Activated CD8-positive, alpha-beta T cell treated with anti-CD3 and anti-CD28 coated beads for 36 hours (primary cell): ENCODE measurements at regions of chr10 and their contacts with region 1.

Region 1: GRCh38 chr10:102352066-102352715 is 43.3 kb upstream of the NFKB2 start:
- DNase-seq: peak; percentile 79
- ATAC-seq: peak; percentile 86
- H3K4me3 Mint-ChIP-seq: no peak overlapping the region
- H3K27ac Mint-ChIP-seq: no peak overlapping the region
- H3K4me1 Mint-ChIP-seq: peaks cover 6% of the 10 kb centered on the region
- H3K27me3 Mint-ChIP-seq: no peaks in the 10 kb centered on the region
- CTCF ChIP-seq: peak; percentile 98

Region 2: GRCh38 chr10:102167861-102168260 is 184.3 kb before region 1 on chr10:
- CTCF ChIA-PET with region 1: interaction called, 80 read pairs
- POLR2A ChIA-PET with region 1: interaction called, 4 read pairs
- intact Hi-C with region 1: no loop called
- DNase-seq: no peak
- ATAC-seq: no peak
- H3K4me3 Mint-ChIP-seq: no peak overlapping the region
- H3K27ac Mint-ChIP-seq: no peak overlapping the region
- H3K4me1 Mint-ChIP-seq: peaks cover 5% of the 10 kb centered on the region
- H3K27me3 Mint-ChIP-seq: no peaks in the 10 kb centered on the region
- CTCF ChIP-seq: no peak

Region 3: DNA sequence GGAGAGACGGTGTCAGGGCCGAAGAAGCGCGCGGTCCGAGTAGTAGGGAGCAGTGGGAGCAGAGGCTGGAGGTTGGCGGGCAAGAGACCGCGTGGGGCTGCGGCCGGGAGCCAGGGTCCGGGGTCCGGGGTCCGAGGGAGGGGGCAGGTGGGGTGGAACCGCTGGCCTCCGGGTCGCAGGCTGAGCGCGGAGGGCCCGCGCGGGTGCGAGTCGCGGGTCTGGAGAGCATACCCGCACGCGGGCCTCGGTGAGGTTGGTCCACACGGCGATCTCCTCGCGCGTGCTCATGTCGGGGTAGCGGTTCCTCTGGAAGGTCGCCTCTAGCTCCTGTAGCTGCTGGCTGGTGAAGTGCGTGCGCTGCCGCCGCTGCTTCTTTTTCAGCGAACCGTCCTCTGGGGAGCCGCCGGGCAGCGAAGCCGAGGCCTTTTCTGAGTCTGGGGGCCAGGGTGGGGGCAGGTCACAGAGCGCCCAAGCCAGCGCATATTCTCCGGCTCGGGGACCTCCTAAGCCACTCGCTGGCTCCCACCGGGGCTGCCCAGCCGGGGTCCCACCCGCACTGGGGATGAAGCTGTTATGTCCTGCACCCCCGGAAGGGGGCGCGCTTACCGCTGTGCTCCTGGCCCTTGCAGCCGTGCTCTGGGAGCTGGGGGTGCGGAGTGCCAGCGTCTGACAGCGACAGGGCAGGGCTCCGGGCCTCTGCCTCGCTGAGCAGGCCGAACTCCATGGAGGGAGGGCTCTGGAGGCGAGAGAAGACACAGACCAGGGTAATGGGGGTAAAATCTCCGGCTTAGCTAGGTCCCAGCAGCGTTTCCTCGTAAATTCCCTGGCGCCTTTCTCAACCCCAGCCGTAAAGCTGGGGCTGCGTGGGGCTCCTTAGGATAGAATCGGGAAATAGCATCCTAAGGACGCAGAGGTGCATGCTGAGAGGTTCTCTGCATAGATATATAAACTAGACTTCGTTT is 120.6 kb before region 1 on chr10:
- CTCF ChIA-PET with region 1: interaction called, 886 read pairs
- POLR2A ChIA-PET with region 1: interaction called, 6 read pairs
- intact Hi-C with region 1: loop called (anchors 1 kb)
- DNase-seq: peak; percentile 84
- ATAC-seq: peak; percentile 79
- H3K4me3 Mint-ChIP-seq: peak overlapping the region; percentile 70
- H3K27ac Mint-ChIP-seq: no peak overlapping the region
- H3K4me1 Mint-ChIP-seq: peaks cover 5% of the 10 kb centered on the region
- H3K27me3 Mint-ChIP-seq: peaks cover 55% of the 10 kb centered on the region
- CTCF ChIP-seq: peak; percentile 93

Region 4: DNA sequence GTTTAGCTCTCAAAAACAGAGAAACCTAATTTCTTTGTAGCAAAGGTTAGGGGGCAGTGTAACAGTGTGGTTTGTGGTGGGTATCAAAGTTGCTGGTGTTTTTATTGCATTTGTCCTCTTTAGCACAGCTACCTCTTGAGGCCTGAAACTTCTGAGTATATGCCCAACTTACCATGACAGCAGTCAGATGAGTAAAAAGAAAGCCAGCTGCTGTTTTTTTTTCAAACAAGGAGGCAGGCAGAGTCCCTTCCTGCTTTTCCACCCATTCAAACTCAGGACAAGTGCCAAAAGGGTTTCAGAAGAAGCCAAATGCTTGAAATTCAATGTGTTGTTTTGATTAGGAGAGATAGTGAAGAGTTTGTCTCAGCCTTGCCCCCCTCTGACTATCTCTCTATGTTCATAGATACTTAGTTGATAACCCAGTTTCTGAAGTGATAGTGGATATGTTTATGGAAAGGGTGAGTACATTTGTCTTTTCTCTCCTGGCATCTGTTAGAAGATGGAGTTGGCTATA is 83.8 kb before region 1 on chr10:
- CTCF ChIA-PET with region 1: interaction called, 18 read pairs
- POLR2A ChIA-PET with region 1: interaction called, 4 read pairs
- intact Hi-C with region 1: no loop called
- DNase-seq: peak; percentile 16
- ATAC-seq: peak; percentile 60
- H3K4me3 Mint-ChIP-seq: no peak overlapping the region
- H3K27ac Mint-ChIP-seq: peak overlapping the region; percentile 87
- H3K4me1 Mint-ChIP-seq: peaks cover 55% of the 10 kb centered on the region
- H3K27me3 Mint-ChIP-seq: no peaks in the 10 kb centered on the region
- CTCF ChIP-seq: no peak

Region 5: GRCh38 chr10:102283488-102283887 is 68.7 kb before region 1 on chr10:
- CTCF ChIA-PET with region 1: interaction called, 13 read pairs
- POLR2A ChIA-PET with region 1: no interaction called
- intact Hi-C with region 1: no loop called
- DNase-seq: no peak
- ATAC-seq: no peak
- H3K4me3 Mint-ChIP-seq: no peak overlapping the region
- H3K27ac Mint-ChIP-seq: peak overlapping the region; percentile 72
- H3K4me1 Mint-ChIP-seq: peaks cover 75% of the 10 kb centered on the region
- H3K27me3 Mint-ChIP-seq: no peaks in the 10 kb centered on the region
- CTCF ChIP-seq: no peak

Region 6: GRCh38 chr10:102310361-102311024 is 41.7 kb before region 1 on chr10:
- CTCF ChIA-PET with region 1: interaction called, 10 read pairs
- POLR2A ChIA-PET with region 1: no interaction called
- intact Hi-C with region 1: no loop called
- DNase-seq: no peak
- ATAC-seq: no peak
- H3K4me3 Mint-ChIP-seq: no peak overlapping the region
- H3K27ac Mint-ChIP-seq: no peak overlapping the region
- H3K4me1 Mint-ChIP-seq: peaks cover 39% of the 10 kb centered on the region
- H3K27me3 Mint-ChIP-seq: no peaks in the 10 kb centered on the region
- CTCF ChIP-seq: no peak

Region 7: DNA sequence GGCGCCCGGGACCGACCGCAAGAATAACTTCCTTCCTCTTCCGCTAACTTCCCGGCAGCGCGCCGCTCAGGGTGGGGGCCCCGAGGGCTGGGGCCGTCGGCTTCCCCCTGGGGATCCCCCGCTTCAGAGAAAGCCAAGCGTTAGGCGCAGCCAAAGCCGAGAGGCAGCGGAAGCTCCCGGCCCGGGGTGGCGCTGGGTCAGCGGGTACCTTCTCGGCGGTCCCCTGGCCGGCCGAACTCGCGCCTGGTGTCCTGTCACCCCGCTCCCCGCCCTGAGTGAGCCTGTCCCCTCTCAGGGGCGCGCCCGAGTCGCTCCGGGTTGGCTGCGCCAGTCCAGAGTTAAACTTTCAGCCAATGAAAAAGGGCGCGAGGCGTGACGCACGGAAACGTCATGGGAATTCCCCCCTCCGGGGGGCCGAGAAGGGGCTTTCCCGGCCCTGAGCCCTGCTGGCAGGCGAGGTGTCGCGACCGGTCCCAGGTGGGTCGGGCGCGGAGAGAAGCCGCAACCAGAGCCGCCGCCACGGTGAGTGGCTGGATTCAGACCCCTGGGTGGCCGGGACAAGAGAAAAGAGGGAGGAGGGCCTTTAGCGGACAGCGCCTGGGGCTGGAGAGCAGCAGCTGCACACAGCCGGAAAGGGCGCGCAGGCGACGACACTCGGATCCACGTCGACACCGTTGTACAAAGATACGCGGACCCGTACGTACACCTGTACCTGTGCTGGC is 42.0 kb after region 1 on chr10:
- CTCF ChIA-PET with region 1: interaction called, 11 read pairs
- POLR2A ChIA-PET with region 1: no interaction called
- intact Hi-C with region 1: no loop called
- DNase-seq: peak; percentile 98
- ATAC-seq: peak; percentile 85
- H3K4me3 Mint-ChIP-seq: peak overlapping the region; percentile 93
- H3K27ac Mint-ChIP-seq: peak overlapping the region; percentile 98
- H3K4me1 Mint-ChIP-seq: peaks cover 44% of the 10 kb centered on the region
- H3K27me3 Mint-ChIP-seq: no peaks in the 10 kb centered on the region
- CTCF ChIP-seq: no peak